K562 (cell line): ENCODE measurements at regions of chr21 and their contacts with region 1.

Region 1: GRCh38 chr21:46323227-46324128 is at the start of gene C21orf58:
- DNase-seq: peak; percentile 98 to 100 (median 99)
- ATAC-seq: peak; percentile 84
- H3K4me3 ChIP-seq: peak within 1 kb of the TSS; percentile 89
- H3K27ac ChIP-seq: peak within 1 kb of the TSS; percentile 99
- H3K4me1 ChIP-seq: peaks cover 32 to 61% of the 10 kb centered on the region in 2 experiments; a peak in 4 of 5 replicates
- H3K27me3 ChIP-seq: no peaks in the 10 kb centered on the region
- CTCF ChIP-seq: no peak
- EP300 ChIP-seq: 0 out of 2 replicates have a peak, but pooled peaks have one; percentile 13
- POLR2A ChIP-seq: peak; percentile 96; the same call in 1 of the 2 replicates
- RAD21 ChIP-seq: no peak
- polyA plus RNA-seq, gene C21orf58: 1.2 to 1.9 TPM

Region 2: GRCh38 chr21:46160907-46161632 is 162.4 kb before region 1 on chr21:
- CTCF ChIA-PET with region 1: no interaction called
- POLR2A ChIA-PET with region 1: no interaction called
- in situ Hi-C with region 1: no loop called
- intact Hi-C with region 1: no loop called
- DNase-seq: no peak
- ATAC-seq: no peak
- H3K4me3 ChIP-seq: no peak overlapping the region
- H3K27ac ChIP-seq: peak overlapping the region; percentile 55; the same call in 1 of the 3 replicates
- H3K4me1 ChIP-seq: peaks cover 0 to 26% of the 10 kb centered on the region in 2 experiments; a peak in 3 of 5 replicates
- H3K27me3 ChIP-seq: no peaks in the 10 kb centered on the region
- CTCF ChIP-seq: no peak
- EP300 ChIP-seq: no peak
- POLR2A ChIP-seq: no peak
- RAD21 ChIP-seq: no peak

Region 3: DNA sequence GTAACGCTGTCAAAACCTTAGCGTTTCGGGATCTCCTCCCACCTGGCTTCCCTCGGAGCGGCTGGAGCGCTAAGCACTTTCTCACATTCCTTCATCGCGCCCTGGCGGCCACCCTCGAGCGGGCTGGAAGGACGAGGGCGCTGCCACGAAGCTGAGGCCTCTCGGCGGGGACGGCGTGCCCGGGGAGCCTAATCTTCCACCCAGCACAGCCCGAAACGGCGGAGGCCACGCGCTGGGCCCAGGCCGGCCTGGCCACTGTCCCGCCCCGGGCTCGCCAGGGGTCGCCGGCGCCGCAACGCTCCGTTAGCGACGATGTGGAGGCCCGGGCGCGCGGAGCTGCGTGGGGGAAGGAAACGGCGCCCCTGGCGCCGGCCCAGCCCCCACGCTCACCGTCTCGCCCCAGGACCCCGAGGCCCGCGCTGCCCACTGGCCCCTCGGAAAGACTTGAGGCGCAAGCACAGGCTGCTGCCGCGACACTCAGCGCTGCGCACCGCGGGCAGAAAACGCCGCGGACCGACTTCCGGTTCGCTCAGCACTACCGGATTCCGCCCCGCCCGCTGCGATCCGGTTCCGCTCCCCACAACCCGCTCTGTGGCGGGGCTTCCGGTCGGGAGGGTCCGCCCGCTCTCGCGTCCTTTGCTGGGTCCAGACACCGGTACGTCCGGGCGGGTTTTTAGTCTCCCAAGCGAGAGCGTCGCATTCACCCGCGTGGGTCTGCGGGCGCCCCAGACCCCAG is 37.5 kb before region 1 on chr21 and contains the start of gene YBEY:
- CTCF ChIA-PET with region 1: no interaction called
- POLR2A ChIA-PET with region 1: interaction called, 4 read pairs
- in situ Hi-C with region 1: no loop called
- intact Hi-C with region 1: loop called (anchors 1 kb)
- DNase-seq: peak; percentile 95 to 97 (median 96)
- ATAC-seq: peak; percentile 97
- H3K4me3 ChIP-seq: peak within 1 kb of the TSS; percentile 74
- H3K27ac ChIP-seq: peak within 1 kb of the TSS; percentile 94
- H3K4me1 ChIP-seq: peaks cover 18 to 23% of the 10 kb centered on the region in 2 experiments
- H3K27me3 ChIP-seq: no peaks in the 10 kb centered on the region
- CTCF ChIP-seq: peak; percentile 41 to 57 (median 57)
- EP300 ChIP-seq: peak; percentile 19; the same call in 1 of the 2 replicates
- POLR2A ChIP-seq: peak; percentile 95
- RAD21 ChIP-seq: peak; percentile 39 to 50
- polyA plus RNA-seq, gene YBEY: 6.4 to 9.4 TPM

Region 4: GRCh38 chr21:46294647-46295176 is 28.8 kb before region 1 on chr21:
- CTCF ChIA-PET with region 1: no interaction called
- POLR2A ChIA-PET with region 1: interaction called, 6 read pairs
- in situ Hi-C with region 1: no loop called
- intact Hi-C with region 1: loop called (anchors 1 kb)
- DNase-seq: peak; percentile 71 to 84 (median 76)
- ATAC-seq: peak; percentile 92
- H3K4me3 ChIP-seq: no peak overlapping the region
- H3K27ac ChIP-seq: peak overlapping the region; percentile 67
- H3K4me1 ChIP-seq: peaks cover 11 to 31% of the 10 kb centered on the region in 2 experiments
- H3K27me3 ChIP-seq: no peaks in the 10 kb centered on the region
- CTCF ChIP-seq: no peak
- EP300 ChIP-seq: peak; percentile 47; the same call in 1 of the 2 replicates
- POLR2A ChIP-seq: peak; percentile 46
- RAD21 ChIP-seq: 0 out of 4 replicates have a peak, but pooled peaks of 1 of the 2 experiments have one; percentile 13

Region 5: GRCh38 chr21:46334351-46335140 is 11.1 kb after region 1 on chr21:
- CTCF ChIA-PET with region 1: no interaction called
- POLR2A ChIA-PET with region 1: interaction called, 13 read pairs
- in situ Hi-C with region 1: no loop called
- intact Hi-C with region 1: no loop called
- DNase-seq: no peak
- ATAC-seq: no peak
- H3K4me3 ChIP-seq: no peak overlapping the region
- H3K27ac ChIP-seq: no peak overlapping the region
- H3K4me1 ChIP-seq: no peaks in the 10 kb centered on the region
- H3K27me3 ChIP-seq: no peaks in the 10 kb centered on the region
- CTCF ChIP-seq: no peak
- EP300 ChIP-seq: no peak
- POLR2A ChIP-seq: no peak
- RAD21 ChIP-seq: no peak